K562 (cell line): ENCODE measurements at regions of chr4 and their contacts with region 1.

Region 1: DNA sequence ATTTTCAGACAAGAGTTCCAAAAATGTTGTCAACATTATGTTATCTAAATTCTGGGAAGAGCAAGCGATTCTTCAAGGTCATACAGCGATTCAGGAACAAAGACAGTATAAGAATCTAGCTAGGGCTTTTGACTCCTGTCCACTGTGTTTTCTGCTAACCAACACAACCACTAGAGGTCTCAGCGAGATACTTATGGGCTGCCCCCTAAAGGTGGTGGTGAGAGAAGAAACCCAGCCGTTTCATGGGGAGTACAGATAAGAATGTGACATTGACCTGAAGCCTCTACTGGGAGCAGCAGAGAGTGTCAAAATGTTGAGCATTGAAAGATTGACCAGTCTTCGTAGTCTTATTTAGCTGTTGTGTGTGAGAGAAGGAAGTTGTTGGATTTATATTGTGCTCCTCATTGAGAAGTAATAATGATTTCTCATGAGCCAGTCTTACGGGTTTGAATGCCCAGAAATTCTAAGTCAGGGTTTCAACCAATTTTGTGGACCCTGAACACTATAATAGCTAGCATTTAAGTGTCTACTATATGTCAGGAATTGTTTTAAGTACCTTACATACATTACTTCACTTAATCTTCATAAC is 168.3 kb downstream of the SPRY1 start:
- DNase-seq: peak; percentile 74 to 90 (median 80)
- ATAC-seq: peak; percentile 100
- H3K4me3 ChIP-seq: no peak overlapping the region
- H3K27ac ChIP-seq: no peak overlapping the region
- H3K4me1 ChIP-seq: peaks cover 0 to 3% of the 10 kb centered on the region in 2 experiments; a peak in 1 of 5 replicates
- H3K27me3 ChIP-seq: peaks cover 0 to 5% of the 10 kb centered on the region in 2 experiments; a peak in 1 of 5 replicates
- CTCF ChIP-seq: peak; percentile 95 to 100 (median 100)
- EP300 ChIP-seq: peak; percentile 67; the same call in 1 of the 2 replicates
- POLR2A ChIP-seq: no peak
- RAD21 ChIP-seq: peak; percentile 80 to 86

Region 2: GRCh38 chr4:123278755-123279154 is 286.1 kb before region 1 on chr4:
- CTCF ChIA-PET with region 1: no interaction called
- POLR2A ChIA-PET with region 1: no interaction called
- in situ Hi-C with region 1: no loop called
- intact Hi-C with region 1: no loop called
- DNase-seq: no peak
- ATAC-seq: no peak
- H3K4me3 ChIP-seq: no peak overlapping the region
- H3K27ac ChIP-seq: no peak overlapping the region
- H3K4me1 ChIP-seq: no peaks in the 10 kb centered on the region
- H3K27me3 ChIP-seq: no peaks in the 10 kb centered on the region
- CTCF ChIP-seq: no peak
- EP300 ChIP-seq: no peak
- POLR2A ChIP-seq: no peak
- RAD21 ChIP-seq: no peak

Region 3: DNA sequence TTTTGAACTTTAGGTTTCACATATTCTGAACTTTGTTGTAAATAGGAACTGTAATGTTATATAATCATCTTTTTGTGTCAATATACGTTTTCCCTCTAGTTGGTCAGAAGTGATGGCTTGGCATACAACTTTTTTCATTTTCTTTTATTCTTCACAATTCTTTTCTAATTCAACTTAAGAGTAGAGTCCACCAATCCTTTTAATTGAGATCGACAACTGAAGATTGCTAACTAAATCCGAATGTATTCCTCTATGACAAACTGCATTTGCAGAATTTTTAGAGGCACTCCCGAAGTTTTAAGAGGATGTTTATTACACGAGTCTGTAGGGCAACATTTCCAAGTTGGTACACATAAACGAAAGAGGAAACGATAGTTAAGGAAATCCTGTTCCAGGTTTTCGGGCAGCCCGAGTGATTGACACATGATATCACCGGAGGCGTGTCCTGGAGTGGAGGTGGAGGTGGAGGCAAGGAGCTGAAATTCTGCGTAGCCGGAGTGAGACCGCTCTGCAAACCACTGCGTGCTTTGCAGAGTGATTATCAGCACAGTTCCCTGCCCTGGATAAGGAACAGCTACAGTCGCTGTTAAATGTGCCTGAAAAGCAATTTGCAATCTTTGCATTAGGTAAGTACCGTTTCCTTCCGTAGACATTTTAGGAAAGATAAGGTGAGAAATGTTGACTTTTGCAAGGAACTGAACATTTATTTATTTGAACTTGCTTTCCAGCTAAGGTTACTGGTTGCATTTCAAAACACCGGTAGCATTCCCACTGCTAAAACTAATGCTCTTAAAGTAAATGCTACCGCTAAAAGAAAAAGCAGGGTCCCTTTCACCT is 168.3 kb before region 1 on chr4 and contains the start of gene SPRY1:
- CTCF ChIA-PET with region 1: no interaction called
- POLR2A ChIA-PET with region 1: no interaction called
- in situ Hi-C with region 1: no loop called
- intact Hi-C with region 1: loop called (anchors 10 kb)
- DNase-seq: peak; percentile 49 to 82 (median 58)
- ATAC-seq: peak; percentile 83
- H3K4me3 ChIP-seq: peak within 1 kb of the TSS; percentile 36
- H3K27ac ChIP-seq: peak within 1 kb of the TSS; percentile 18; the same call in 1 of the 3 replicates
- H3K4me1 ChIP-seq: peaks cover 2 to 19% of the 10 kb centered on the region in 2 experiments; a peak in 3 of 5 replicates
- H3K27me3 ChIP-seq: peaks cover 0 to 8% of the 10 kb centered on the region in 2 experiments; a peak in 1 of 5 replicates
- CTCF ChIP-seq: no peak
- EP300 ChIP-seq: no peak
- POLR2A ChIP-seq: no peak
- RAD21 ChIP-seq: no peak
- polyA plus RNA-seq, gene SPRY1: 0.18 TPM in 1 of 2 experiments, not detected in the other

Region 4: DNA sequence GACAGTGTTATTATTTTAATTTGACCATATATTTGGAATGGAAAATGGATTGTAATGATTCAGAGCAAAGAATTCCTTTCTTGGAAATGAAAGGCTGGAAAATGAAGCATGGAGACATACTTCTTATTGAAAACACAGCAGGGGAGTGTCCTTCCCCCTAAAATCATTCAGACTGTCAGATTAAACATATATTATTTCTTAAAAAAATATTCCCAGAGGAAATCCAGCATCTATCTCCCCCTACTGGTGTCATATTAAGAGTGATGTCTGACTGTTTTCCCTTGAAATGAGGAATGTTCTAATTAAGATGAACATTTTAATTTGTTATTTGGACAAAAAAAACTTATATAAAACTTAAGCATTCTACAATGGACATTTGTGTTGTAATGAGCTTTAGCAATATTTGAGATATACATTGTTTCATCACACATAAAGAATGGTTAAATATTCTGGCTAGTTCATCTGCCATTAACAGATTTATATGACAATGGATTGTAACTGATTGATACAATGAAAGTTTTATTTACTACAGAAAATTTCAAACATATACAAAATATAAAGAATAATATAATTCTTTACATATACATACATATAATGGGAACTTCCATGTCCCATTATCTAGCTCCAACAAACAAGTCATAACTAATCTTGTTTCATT is 96.4 kb after region 1 on chr4:
- CTCF ChIA-PET with region 1: interaction called, 3 read pairs
- POLR2A ChIA-PET with region 1: no interaction called
- in situ Hi-C with region 1: no loop called
- intact Hi-C with region 1: loop called (anchors 1 kb)
- DNase-seq: peak in 2 of 4 experiments; percentile 14 to 20
- ATAC-seq: no peak
- H3K4me3 ChIP-seq: no peak overlapping the region
- H3K27ac ChIP-seq: no peak overlapping the region
- H3K4me1 ChIP-seq: no peaks in the 10 kb centered on the region; a peak in 1 of 5 replicates
- H3K27me3 ChIP-seq: no peaks in the 10 kb centered on the region
- CTCF ChIP-seq: peak in 2 of 3 experiments; percentile 39 to 59; a peak in 3 of 6 replicates
- EP300 ChIP-seq: no peak
- POLR2A ChIP-seq: no peak
- RAD21 ChIP-seq: peak; percentile 30 to 62; a peak in 3 of 4 replicates